Cardiac septum (tissue), 1 donor: ENCODE measurements at regions of chr1 and their contacts with region 1.

Region 1: DNA sequence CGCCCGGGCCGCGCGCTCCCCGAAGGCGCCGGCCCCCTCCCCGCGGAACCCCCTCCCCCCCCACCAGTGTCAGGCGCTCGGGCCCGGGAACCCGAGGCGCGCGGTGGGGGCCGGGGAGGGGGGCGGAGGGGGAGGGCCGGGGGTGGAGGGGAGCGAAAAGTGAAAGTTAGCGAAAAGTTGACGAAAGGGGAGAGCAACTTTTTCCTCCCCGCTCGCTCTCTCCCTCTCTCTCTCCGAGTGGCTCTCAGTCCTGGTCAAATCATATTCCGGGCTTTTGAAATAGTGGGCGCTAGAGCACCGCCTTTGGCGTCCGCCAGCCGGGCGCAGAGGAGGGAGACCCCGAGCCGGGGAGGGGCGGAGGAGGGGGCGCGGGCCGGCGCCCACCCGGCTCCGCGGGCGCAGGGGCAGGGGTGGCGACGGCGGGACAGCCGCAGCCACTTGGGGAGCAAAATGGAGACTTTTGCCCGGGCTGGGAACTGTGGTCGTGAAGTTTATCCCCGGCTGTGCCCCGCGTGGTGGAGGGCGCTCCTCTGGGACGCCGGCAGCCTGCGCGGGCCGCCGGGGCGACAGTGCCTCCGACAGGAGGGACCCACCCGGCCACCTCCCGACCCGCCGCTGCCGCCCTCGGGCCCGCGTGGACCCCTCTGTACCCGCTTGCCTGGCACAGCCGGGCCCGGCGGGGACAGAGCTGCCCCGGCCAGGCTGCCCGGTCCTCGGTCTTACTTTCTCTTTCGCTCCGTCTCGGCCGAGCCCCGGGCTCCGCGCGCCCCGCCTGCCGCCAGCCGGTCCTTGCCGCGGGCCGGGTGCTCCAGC is 694 bp downstream of the PRDM16 start:
- DNase-seq: peak; percentile 77

Region 2: DNA sequence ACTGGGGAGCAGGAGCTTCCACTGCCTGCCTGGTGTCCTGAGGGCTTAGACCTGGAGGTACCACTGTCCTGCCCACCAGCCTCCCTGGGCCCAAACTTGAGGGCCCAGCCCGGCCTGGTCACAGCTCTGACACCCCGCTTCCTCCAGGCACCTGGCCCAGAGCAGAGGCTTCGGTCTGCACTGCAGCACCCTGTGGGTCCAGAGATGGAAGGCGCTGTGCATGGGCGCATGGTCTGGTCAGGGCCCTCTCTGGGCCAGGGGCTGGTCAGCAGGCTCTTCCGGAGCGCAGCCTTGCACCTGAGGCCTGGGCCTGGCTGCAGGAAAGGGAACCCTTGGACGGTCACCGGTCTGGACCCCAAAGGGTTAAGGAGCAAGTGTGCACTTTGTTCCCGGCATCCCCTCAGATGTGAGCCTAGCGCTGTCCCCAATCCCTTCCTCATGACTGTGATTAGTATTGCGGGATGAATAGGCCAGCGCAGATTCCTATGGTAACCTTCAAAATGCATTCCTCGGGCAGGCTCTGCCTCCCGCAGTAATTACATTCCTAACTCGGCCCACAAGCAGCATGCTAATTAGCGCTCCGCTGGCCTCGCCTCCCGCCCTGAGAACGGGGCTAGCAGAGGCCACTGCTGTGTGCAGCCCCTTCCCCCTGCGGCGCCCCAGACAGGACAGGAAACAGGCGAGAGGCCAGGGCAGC is 35.6 kb after region 1 on chr1:
- intact Hi-C with region 1: no loop called
- DNase-seq: no peak

Region 3: DNA sequence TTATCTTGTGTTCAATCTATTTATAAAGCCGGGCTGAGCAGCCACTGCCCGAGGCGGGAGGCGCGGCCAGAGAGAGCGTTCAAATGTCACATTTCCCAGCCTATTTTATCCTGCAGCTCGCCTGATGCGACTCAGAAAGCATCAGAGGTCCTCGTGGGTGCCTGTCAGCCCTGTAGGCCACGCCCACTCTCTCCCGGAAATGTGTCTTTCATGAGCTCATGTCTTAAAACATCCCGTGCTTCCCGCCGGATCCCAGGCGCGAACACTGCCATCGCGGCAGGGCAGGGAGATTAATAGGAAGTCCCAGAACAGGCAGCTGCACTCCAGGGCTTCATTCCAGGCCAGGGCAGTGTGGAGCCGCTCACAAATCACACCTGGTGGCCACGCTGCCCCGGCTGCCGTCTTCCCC is 116.8 kb after region 1 on chr1:
- intact Hi-C with region 1: loop called (anchors 5 kb)
- DNase-seq: peak; percentile 93

Region 4: DNA sequence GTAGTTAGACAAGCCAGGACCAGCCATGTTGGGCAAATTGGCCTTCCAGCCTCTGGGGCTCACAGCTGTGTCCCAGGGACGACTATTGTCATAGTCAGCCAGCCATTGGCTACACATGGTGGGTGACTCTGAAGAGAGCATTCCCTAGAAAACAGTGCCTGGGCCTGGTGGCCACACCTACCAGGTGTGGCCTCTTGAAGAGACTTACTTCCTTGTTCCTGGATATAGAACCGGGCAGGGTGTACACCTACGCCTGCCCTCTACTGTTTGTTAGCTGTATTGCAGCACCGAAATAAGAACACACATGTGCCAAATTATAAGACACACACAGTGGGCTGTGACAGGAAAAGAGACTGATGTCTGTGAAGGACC is 250.2 kb after region 1 on chr1:
- intact Hi-C with region 1: loop called (anchors 10 kb)
- DNase-seq: no peak

Region 5: DNA sequence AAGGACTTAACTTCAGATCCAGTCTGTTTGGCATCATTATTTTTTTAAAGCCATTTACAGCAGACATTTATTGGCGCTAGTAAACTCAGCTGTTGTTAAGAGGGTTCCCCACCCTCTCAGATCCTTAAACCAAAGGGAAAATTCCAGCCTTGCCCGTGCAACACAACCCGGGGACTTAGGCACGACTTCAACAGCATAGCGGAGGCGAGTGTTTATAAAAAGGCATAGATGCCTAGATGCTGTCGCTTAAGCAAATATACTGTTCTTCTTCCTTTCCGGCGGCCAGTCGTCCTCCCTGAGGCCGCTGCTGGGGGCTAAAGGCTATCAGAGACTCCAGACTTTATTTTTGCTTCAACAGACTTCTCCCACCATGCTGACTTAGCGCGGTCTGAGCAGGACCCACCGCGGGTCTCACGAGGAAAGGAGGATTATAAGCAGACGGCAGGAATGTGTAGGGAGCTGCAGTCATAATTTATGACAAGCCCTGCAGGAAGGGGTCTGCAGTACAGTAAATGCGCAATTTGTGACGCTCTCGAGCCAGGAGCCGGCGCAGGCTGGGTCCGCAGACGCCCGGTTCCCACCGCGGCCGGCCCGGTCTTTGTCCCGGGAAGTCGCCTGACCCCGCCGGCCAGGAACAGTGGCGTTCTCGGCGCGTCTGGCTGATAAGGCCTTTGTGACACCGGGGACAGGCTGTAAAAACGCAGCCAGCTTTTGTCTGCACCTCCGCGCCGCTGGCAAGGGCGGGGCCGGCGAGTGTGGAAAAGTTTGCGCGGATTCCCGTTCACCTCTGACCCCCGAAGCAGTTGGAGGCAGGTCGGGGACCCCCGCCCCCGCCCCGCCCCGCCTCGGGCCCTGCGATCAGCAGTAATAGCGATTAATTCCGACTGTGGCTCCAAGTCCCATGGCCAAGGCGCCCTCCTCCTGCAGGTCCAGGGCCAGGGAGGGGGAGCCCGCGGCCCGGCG is 323.6 kb after region 1 on chr1:
- intact Hi-C with region 1: loop called (anchors 5 kb)
- DNase-seq: no peak

Region 6: DNA sequence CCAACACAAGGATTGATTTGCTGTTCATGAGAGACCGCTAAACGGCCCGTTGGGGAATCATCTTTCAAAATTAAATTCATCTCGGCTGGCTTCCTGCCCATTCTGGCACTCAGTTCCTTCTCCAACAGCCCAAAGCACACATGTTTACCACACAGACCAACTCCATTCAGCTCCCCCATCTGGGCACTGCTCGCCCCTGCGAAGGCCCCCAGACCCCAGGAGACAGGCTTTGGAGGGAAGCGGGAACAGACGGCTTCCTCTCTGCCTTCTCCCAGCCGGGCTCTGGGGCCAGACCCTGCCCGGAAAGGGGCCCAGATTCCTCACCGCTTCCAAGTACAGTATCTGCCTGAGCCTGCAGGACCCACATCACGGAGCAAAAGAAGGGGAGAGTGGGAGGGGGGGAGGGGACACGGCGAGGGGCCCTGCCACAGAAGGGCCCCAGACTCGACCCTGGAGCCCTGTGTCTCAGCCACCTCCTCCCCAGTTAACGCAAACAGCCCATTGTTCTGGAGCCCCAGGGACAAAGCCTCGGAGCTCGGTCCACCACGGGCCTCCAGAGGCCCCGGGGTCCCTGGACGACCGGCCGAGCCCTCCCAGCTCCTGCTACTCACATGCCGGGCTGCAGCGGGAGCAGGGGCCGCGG is 541.0 kb after region 1 on chr1:
- intact Hi-C with region 1: no loop called
- DNase-seq: no peak